CD4-positive, alpha-beta memory T cell (primary cell): ENCODE measurements at regions of chr3 and their contacts with region 1.

Region 1: DNA sequence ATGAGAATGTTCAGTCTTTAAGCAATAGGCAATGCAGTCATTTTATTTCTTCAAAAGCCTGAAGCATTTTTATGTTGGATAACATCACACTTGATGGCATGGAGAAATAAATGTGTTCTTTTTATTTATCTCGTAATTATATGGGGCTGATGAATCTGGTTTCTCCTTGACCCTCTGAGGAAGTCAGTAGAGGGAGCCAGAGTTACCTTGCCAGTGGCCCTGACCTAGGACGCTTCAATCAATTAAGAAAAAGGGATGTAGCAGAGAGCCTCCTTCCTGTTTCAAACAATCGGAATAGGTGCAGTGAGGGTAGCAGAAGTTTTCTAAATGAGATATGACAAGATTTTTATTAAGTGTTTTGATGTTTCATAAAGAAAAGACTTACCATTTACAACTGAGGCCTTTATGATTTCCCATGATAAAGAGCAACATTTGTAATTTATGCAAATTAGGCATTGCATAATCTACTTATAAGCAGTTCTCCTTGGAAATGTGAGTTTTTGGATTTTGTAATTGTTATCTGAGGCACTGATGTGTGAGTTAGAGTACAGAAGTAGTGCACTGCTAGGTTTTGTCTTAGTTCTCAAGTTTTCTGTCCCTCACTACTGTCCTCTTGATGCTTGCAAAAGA is 129.1 kb downstream of the RAP2B start:
- DNase-seq: peak in 3 of 5 donors; percentile 15 to 21 (median 21)
- H3K4me3 ChIP-seq: no peak overlapping the region
- H3K4me3 Mint-ChIP-seq: peak overlapping the region in 3 of 8 donors; percentile 1 to 46 (median 35)
- H3K27ac ChIP-seq: no peak overlapping the region
- H3K27ac Mint-ChIP-seq: peak overlapping the region in 2 of 7 donors; percentile 50 to 71
- H3K4me1 ChIP-seq: peaks cover 50% of the 10 kb centered on the region
- H3K4me1 Mint-ChIP-seq: peaks cover 35 to 49% (median 43%) of the 10 kb centered on the region in 4 donors
- H3K27me3 ChIP-seq: no peaks in the 10 kb centered on the region
- H3K27me3 Mint-ChIP-seq: no peaks in the 10 kb centered on the region

Region 2: DNA sequence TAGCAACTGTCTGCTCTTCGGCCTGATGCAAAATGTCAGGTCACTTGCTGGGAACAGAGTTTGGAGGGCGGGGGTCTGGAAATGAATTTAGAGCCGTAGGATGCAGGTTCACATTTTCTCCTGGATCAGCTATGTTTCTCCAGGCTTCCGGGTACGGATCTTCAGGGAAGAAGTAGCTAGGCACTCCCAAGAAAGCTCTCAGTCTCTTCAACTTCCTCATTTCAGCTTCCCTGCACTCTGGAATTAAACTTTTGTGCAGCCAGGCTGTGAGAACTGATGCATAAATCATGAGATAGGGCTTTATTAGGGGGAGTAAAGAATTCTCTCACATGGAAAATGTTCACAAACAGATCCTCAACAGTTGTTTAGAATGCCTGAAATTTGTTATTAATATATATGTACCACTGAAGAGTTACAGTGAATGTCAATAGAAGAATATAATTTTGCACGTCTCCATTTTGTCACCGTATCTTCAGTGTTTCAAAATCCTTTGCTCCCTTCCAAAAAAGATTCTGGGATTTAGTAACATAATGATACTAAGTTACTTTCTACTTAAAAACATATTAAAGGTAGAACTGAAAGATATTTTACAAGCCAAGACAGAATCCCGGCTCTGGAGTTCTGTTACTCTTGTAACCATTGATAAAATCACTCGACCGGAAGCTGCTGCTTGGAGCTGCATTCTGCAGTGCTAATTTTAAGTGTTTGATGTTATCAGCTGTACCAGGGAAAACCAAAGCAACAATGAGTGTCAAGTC is 634.8 kb before region 1 on chr3:
- CTCF ChIA-PET with region 1: no interaction called
- POLR2A ChIA-PET with region 1: no interaction called
- intact Hi-C with region 1: no loop called
- DNase-seq: no peak
- H3K4me3 ChIP-seq: no peak overlapping the region
- H3K4me3 Mint-ChIP-seq: no peak overlapping the region
- H3K27ac ChIP-seq: no peak overlapping the region
- H3K27ac Mint-ChIP-seq: no peak overlapping the region
- H3K4me1 ChIP-seq: no peaks in the 10 kb centered on the region
- H3K4me1 Mint-ChIP-seq: no peaks in the 10 kb centered on the region
- H3K27me3 ChIP-seq: no peaks in the 10 kb centered on the region
- H3K27me3 Mint-ChIP-seq: peaks cover 6 to 8% of the 10 kb centered on the region in 2 donors

Region 3: DNA sequence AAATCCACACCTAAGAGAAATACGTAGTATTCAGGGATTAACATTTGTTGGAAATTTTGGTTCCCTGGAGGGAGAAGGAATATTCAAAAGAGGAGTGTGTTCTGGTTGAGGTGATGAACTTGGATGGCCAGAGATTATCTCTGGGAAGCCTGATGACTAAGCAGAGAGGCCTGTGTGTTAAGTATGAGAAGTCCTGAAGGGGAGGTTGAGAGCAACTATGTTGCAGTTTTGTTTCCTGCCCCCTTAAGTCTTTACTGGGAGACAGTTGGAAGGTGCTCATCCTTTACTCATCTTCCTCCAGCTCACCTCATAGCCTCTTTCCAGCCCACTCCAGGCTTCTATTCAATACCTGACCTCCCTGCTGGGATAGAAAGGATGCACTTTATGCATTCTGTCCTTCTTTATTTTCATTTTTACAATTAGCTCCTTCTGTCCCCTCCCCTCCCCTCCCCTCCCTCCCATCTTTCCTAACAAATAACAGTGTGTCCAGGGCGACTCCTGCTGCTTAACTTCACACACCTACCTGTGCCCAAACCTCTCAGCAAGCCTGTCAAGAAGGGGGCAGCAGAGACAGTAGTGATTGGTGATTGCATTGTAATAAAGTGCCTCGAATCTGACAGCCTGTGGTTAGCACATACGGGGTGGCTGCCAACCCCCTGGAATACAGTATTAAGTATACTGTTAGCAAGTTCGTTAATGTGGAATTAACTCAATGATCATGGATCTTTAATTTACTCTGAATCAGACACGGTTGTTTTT is 117.2 kb before region 1 on chr3:
- CTCF ChIA-PET with region 1: interaction called, 191 read pairs
- POLR2A ChIA-PET with region 1: interaction called, 12 read pairs
- intact Hi-C with region 1: no loop called
- DNase-seq: no peak
- H3K4me3 ChIP-seq: no peak overlapping the region
- H3K4me3 Mint-ChIP-seq: no peak overlapping the region
- H3K27ac ChIP-seq: no peak overlapping the region
- H3K27ac Mint-ChIP-seq: peak overlapping the region; percentile 17 to 83 (median 68)
- H3K4me1 ChIP-seq: peaks cover 17% of the 10 kb centered on the region
- H3K4me1 Mint-ChIP-seq: peaks cover 17 to 48% (median 38%) of the 10 kb centered on the region in 4 donors
- H3K27me3 ChIP-seq: no peaks in the 10 kb centered on the region
- H3K27me3 Mint-ChIP-seq: no peaks in the 10 kb centered on the region

Region 4: GRCh38 chr3:153252963-153253362 is 38.2 kb before region 1 on chr3:
- CTCF ChIA-PET with region 1: interaction called, 11 read pairs
- POLR2A ChIA-PET with region 1: interaction called, 4 read pairs
- intact Hi-C with region 1: loop called (anchors 5 kb)
- DNase-seq: no peak
- H3K4me3 ChIP-seq: no peak overlapping the region
- H3K4me3 Mint-ChIP-seq: no peak overlapping the region
- H3K27ac ChIP-seq: no peak overlapping the region
- H3K27ac Mint-ChIP-seq: no peak overlapping the region
- H3K4me1 ChIP-seq: peaks cover 9% of the 10 kb centered on the region
- H3K4me1 Mint-ChIP-seq: peaks cover 16 to 39% (median 29%) of the 10 kb centered on the region in 4 donors
- H3K27me3 ChIP-seq: no peaks in the 10 kb centered on the region
- H3K27me3 Mint-ChIP-seq: no peaks in the 10 kb centered on the region

Region 5: DNA sequence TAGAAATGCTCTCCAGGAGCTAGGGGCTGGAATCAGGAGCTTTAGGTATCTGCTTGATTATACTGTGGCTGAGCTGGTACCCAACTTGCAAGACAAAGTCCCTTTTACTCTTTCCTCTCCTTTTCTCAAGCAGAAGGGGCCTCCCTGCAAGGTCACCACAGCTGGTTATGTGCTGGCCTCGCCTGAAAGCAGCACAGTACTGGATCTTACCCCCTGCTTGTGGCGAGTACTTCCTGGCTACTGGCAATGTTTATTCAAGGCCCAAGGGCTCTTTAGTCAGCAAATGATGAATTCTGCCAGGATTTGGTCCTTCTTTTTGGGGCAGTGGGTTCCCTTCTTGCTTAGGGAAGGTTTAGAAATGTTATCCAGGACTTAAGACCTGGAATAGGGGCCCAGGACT is 105.4 kb after region 1 on chr3:
- CTCF ChIA-PET with region 1: no interaction called
- POLR2A ChIA-PET with region 1: no interaction called
- intact Hi-C with region 1: no loop called
- DNase-seq: no peak
- H3K4me3 ChIP-seq: no peak overlapping the region
- H3K4me3 Mint-ChIP-seq: no peak overlapping the region
- H3K27ac ChIP-seq: no peak overlapping the region
- H3K27ac Mint-ChIP-seq: no peak overlapping the region
- H3K4me1 ChIP-seq: peaks cover 10% of the 10 kb centered on the region
- H3K4me1 Mint-ChIP-seq: peaks cover 18 to 27% (median 24%) of the 10 kb centered on the region in 4 donors
- H3K27me3 ChIP-seq: no peaks in the 10 kb centered on the region
- H3K27me3 Mint-ChIP-seq: peaks cover 0 to 3% of the 10 kb centered on the region in 2 donors

Region 6: DNA sequence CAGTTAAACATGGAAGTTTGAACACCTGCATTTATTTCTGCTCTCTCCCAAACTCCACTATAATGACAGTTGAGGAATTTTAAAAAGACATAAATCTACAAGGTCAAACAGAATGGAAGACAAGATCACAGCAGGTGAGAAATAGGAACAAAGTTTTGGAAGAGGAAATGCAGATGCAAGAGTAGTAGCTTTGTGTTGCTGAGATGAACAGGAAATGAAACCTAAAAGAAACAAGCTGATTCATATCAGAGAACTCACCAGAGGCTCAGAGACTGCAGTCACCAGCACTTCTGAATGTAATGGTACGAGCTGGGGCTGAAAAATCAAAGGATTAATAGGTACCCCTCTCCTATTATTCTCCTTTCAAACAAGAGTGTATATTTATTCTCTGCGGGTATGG is 330.8 kb after region 1 on chr3:
- CTCF ChIA-PET with region 1: interaction called, 10 read pairs
- POLR2A ChIA-PET with region 1: interaction called, 3 read pairs
- intact Hi-C with region 1: loop called (anchors 10 kb)
- DNase-seq: peak in 4 of 5 donors; percentile 21 to 40 (median 32)
- H3K4me3 ChIP-seq: peak overlapping the region in 1 of 2 donors; percentile 38
- H3K4me3 Mint-ChIP-seq: peak overlapping the region; percentile 46 to 84 (median 66)
- H3K27ac ChIP-seq: peak overlapping the region; percentile 14
- H3K27ac Mint-ChIP-seq: peak overlapping the region; percentile 43 to 92 (median 75)
- H3K4me1 ChIP-seq: peaks cover 60% of the 10 kb centered on the region
- H3K4me1 Mint-ChIP-seq: peaks cover 46 to 61% (median 55%) of the 10 kb centered on the region in 4 donors
- H3K27me3 ChIP-seq: no peaks in the 10 kb centered on the region
- H3K27me3 Mint-ChIP-seq: no peaks in the 10 kb centered on the region

Region 7: GRCh38 chr3:153768561-153769469 is 477.6 kb after region 1 on chr3:
- CTCF ChIA-PET with region 1: interaction called, 88 read pairs
- POLR2A ChIA-PET with region 1: no interaction called
- intact Hi-C with region 1: loop called (anchors 1 kb)
- DNase-seq: peak; percentile 52 to 65 (median 62)
- H3K4me3 ChIP-seq: no peak overlapping the region
- H3K4me3 Mint-ChIP-seq: no peak overlapping the region
- H3K27ac ChIP-seq: no peak overlapping the region
- H3K27ac Mint-ChIP-seq: no peak overlapping the region
- H3K4me1 ChIP-seq: no peaks in the 10 kb centered on the region
- H3K4me1 Mint-ChIP-seq: peaks cover 0 to 5% (median 3%) of the 10 kb centered on the region in 4 donors
- H3K27me3 ChIP-seq: no peaks in the 10 kb centered on the region
- H3K27me3 Mint-ChIP-seq: peaks cover 2 to 4% of the 10 kb centered on the region in 2 donors